Left cardiac atrium (tissue), 4 donors: ENCODE measurements at regions of chr6 and their contacts with region 1.

Region 1: DNA sequence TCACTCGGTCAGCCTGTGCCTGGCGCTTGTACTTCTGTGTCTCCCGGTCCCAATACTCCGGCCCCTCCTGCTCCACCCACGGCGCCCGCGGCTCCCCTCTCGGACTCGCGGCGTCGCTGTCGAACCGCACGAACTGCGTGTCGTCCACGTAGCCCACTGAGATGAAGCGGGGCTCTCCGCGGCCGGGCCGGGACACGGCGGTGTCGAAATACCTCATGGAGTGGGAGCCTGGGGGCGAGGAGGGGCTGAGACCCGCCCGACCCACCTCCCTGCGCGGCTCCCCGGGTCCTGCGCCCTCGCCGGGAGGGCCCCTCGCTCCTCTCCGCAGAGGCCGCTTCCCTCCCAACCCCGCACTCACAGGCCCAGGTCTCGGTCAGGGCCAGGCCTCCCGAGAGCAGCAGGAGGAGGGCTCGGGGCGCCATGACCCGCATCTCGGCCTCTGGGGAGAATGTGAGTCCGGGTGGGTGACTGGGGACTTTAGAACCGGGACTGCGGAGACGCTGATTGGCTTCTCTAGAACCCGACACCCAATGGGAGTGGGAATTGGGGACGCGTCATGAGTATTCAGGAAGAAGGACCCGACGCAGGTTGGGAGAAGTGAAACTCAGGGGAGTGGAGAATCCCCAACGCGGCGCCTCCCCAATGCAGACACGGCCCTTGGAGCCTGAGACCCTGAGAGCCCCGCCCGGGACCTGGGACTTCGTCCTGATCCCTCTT is at the start of gene HLA-C:
- DNase-seq: peak; percentile 93
- ATAC-seq: peak; percentile 97 to 98
- total RNA-seq, gene HLA-C: 235 to 362 TPM

Region 2: DNA sequence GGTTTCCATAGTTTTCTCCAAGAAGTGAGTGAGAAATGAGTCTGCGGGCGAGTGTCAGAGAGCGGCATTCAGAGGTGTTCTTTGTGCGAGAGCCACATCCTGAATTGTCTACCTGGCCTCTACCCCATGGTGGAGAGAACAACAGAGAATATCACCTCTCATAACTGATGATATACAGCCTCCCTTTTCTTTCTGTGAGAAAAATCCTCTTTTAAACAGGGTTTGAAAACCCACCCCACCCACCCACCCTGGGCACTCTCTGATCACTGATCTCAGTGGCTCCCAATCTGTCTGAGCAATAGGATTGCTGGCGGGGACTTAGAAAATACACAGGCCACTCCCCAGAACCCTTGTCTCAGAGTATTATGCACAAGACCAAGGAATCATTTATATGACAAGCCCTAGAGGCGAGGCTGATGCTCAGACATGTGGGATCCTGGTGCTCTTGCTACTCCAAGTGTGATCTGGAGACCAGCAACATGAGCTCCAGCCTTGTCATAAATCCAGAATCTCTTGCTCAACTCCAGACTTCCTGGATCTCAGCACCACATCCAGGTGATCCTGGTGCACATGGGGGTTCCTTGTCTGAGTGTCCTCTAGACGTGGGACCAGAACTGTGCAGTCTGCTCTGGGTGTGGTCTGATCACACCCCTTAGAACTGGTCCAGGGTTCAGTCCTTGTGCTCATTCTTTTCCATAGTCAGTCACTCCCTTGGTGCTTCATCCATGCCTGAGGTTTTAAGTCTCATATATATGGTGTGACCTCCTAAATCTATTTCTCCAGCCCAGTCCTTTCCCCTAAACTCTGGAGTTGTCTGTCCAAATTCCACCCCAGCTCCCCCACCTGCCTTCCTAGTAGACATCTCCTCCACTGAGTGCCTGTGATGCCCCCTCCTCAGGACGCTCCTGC is 79.9 kb after region 1 on chr6:
- intact Hi-C with region 1: loop called (anchors 5 kb)
- DNase-seq: no peak
- ATAC-seq: no peak